Naive thymus-derived CD4-positive, alpha-beta T cell (primary cell): ENCODE measurements at regions of chr2 and their contacts with region 1.

Region 1: DNA sequence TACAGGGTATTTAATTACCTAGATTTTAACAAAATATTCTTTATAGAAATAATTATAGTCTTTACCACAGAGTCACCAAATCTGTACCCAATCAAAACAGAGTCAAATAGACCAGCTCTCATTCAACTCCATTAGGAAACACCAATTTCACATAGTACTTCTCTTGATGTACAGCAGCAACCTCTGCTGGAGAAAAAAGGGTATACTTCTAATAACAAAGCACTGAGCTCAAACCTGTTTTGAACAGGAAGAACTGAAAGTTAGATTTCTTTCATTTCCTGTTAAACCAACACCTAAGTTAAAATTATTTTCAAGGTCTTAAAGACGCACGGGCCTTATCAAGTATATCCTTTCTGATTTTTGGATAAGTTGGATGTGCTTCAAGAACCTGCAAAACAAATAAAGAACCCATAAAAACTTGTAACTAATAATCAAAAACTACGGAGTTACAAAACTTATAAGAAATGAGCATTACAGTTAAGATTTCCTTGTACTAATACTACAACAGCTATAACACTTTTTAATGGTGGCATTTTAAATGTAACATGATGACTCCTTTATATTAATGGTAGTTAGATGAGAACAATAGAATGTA is 79.0 kb downstream of the TTC21B start:
- DNase-seq: peak in 7 of 9 donors; percentile 29 to 70 (median 58)
- ATAC-seq: peak; percentile 91
- H3K4me3 ChIP-seq: no peak overlapping the region
- H3K4me3 Mint-ChIP-seq: peak overlapping the region in 6 of 10 donors; percentile 26 to 51 (median 36)
- H3K27ac ChIP-seq: no peak overlapping the region
- H3K27ac Mint-ChIP-seq: peak overlapping the region in 8 of 9 donors; percentile 41 to 88 (median 77)
- H3K4me1 ChIP-seq: peaks cover 0 to 7% of the 10 kb centered on the region in 2 donors
- H3K4me1 Mint-ChIP-seq: peaks cover 0 to 29% (median 27%) of the 10 kb centered on the region in 7 donors
- H3K27me3 ChIP-seq: no peaks in the 10 kb centered on the region
- H3K27me3 Mint-ChIP-seq: no peaks in the 10 kb centered on the region

Region 2: DNA sequence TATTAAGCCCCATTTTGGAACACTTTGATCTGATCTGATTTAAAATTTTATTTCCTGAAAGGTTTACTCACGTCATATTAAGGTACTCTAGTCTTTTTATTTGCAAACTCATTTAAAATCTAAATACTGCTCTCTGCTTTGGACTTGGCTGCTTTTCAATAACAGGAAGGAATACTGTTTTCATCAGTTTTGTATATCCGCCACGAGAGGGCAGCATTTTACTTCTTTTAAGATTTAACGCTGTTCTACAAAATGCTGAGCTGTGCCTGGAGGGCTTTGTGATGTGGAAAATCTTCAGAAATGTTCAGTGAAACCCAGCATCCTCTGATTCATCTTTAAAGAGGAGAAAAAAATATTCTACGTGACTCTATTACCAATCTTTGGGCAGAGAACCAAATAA is 881.7 kb before region 1 on chr2:
- CTCF ChIA-PET with region 1: interaction called, 3 read pairs
- POLR2A ChIA-PET with region 1: no interaction called
- intact Hi-C with region 1: loop called (anchors 1 kb)
- DNase-seq: peak in 7 of 9 donors; percentile 29 to 54 (median 42)
- ATAC-seq: peak; percentile 68
- H3K4me3 ChIP-seq: no peak overlapping the region
- H3K4me3 Mint-ChIP-seq: no peak overlapping the region
- H3K27ac ChIP-seq: no peak overlapping the region
- H3K27ac Mint-ChIP-seq: no peak overlapping the region
- H3K4me1 ChIP-seq: no peaks in the 10 kb centered on the region
- H3K4me1 Mint-ChIP-seq: peaks cover 10 to 36% (median 16%) of the 10 kb centered on the region in 7 donors
- H3K27me3 ChIP-seq: no peaks in the 10 kb centered on the region
- H3K27me3 Mint-ChIP-seq: no peaks in the 10 kb centered on the region

Region 3: DNA sequence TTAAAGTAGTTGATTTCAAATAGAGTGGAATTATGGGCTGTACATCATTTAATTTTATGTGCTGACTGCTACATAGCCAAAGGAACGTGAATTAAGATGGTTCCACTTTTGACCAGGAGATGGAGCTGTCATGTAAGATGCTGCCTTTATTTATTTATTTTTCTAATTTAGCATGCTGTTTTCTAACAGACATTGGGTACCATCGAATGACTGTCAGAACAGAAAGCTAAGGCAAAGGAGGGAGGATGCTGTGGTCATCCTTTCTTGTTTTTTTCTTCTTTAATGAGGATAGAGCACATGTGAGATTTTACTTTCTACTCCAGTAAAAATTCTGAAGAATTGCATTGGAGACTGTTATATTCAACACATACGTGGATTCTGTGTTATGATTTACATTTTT is 635.3 kb before region 1 on chr2 and contains the start of gene SCN2A:
- CTCF ChIA-PET with region 1: no interaction called
- POLR2A ChIA-PET with region 1: no interaction called
- intact Hi-C with region 1: loop called in 1 of 2 experiments (anchors 5 kb)
- DNase-seq: peak in 3 of 9 donors; percentile 1 to 5 (median 1)
- ATAC-seq: no peak
- H3K4me3 ChIP-seq: no peak within 1 kb of the TSS
- H3K4me3 Mint-ChIP-seq: no peak within 1 kb of the TSS
- H3K27ac ChIP-seq: no peak within 1 kb of the TSS
- H3K27ac Mint-ChIP-seq: no peak within 1 kb of the TSS
- H3K4me1 ChIP-seq: no peaks in the 10 kb centered on the region
- H3K4me1 Mint-ChIP-seq: no peaks in the 10 kb centered on the region
- H3K27me3 ChIP-seq: peaks cover 0 to 3% of the 10 kb centered on the region in 2 donors
- H3K27me3 Mint-ChIP-seq: peaks cover 0 to 9% (median 0%) of the 10 kb centered on the region in 5 donors
- total RNA-seq, gene SCN2A: not detected

Region 4: DNA sequence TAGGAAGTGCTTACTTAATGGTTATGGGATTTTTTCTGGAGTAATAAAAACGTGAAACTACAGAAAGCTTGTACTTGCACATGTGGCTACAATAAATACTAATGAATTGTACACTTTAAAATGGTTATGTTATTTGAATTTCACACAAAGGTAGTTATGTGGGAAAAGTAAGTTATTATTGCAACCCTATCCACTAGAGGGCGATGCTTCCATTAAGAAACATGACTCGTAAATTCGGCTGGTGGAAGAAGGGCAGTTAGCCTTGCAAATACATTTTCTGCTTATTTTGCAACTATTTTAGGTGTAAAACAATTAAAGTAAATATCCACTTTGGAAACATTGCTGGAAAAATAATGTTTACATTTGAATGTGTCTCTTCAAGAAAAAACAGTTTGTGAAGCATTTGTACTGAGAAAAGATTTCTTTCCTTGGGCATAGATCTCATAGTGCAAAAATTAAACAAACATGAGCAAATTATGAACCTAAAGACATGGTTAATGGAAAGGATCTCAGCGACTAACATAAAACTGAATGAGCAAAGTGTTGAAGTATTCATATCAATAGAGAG is 473.2 kb before region 1 on chr2:
- CTCF ChIA-PET with region 1: interaction called, 17 read pairs
- POLR2A ChIA-PET with region 1: no interaction called
- intact Hi-C with region 1: loop called (anchors 1 kb)
- DNase-seq: peak in 7 of 9 donors; percentile 8 to 56 (median 39)
- ATAC-seq: peak; percentile 60
- H3K4me3 ChIP-seq: no peak overlapping the region
- H3K4me3 Mint-ChIP-seq: no peak overlapping the region
- H3K27ac ChIP-seq: no peak overlapping the region
- H3K27ac Mint-ChIP-seq: no peak overlapping the region
- H3K4me1 ChIP-seq: no peaks in the 10 kb centered on the region
- H3K4me1 Mint-ChIP-seq: peaks cover 0 to 3% (median 0%) of the 10 kb centered on the region in 7 donors
- H3K27me3 ChIP-seq: no peaks in the 10 kb centered on the region
- H3K27me3 Mint-ChIP-seq: peaks cover 14 to 35% (median 26%) of the 10 kb centered on the region in 5 donors

Region 5: DNA sequence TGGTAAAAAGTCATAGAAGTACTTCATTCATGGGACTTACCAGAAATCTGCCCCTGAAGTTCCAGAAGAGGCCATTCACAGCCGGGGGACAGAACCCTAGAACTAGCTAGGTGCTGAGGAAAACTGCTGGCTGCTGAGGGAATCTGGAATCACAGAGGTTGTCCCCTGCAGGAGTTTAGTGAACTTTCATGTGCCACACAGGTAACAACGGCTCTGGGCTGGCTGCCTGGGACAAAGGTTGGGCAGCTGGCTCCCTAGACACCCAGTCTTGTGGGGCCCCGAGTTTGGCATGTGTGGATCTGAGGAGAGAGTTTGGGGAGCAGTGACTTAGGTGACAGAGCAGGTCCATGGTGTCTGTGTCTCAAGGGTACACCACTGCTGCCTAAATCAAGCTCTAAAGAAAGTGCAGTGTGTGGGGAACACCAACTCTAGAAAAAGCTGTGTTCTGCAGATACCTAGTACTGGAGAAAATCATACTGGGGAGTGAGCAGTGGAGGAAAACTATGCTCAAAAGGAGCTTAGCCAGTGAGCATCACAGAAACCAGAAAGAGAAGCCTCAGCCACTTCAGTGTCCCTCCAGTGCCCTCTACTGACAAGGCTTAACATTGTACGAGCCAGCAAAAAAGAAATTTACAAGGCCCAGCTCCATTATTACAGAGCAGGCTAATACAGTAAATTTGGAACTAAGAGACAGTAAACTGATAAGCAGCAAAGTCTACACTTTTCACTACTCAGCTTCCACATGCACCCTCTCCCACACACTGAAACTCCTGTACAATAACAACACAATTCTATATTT is 95.7 kb before region 1 on chr2:
- CTCF ChIA-PET with region 1: no interaction called
- POLR2A ChIA-PET with region 1: no interaction called
- intact Hi-C with region 1: loop called in 1 of 2 experiments (anchors 2 kb)
- DNase-seq: no peak
- ATAC-seq: no peak
- H3K4me3 ChIP-seq: no peak overlapping the region
- H3K4me3 Mint-ChIP-seq: no peak overlapping the region
- H3K27ac ChIP-seq: no peak overlapping the region
- H3K27ac Mint-ChIP-seq: no peak overlapping the region
- H3K4me1 ChIP-seq: peaks cover 0 to 9% of the 10 kb centered on the region in 2 donors
- H3K4me1 Mint-ChIP-seq: peaks cover 0 to 14% (median 0%) of the 10 kb centered on the region in 7 donors
- H3K27me3 ChIP-seq: no peaks in the 10 kb centered on the region
- H3K27me3 Mint-ChIP-seq: peaks cover 0 to 6% (median 0%) of the 10 kb centered on the region in 5 donors